Common myeloid progenitor, CD34-positive (primary cell): ENCODE measurements at regions of chr18 and their contacts with region 1.

Region 1: GRCh38 chr18:76633588-76634269 is 138.7 kb upstream of the ZNF516 start:
- DNase-seq: peak in 2 of 3 donors; percentile 53 to 60
- H3K4me3 ChIP-seq: no peak overlapping the region
- H3K27ac ChIP-seq: no peak overlapping the region
- H3K4me1 ChIP-seq: peaks cover 0 to 7% (median 3%) of the 10 kb centered on the region in 4 experiments
- H3K27me3 ChIP-seq: no peaks in the 10 kb centered on the region

Region 2: DNA sequence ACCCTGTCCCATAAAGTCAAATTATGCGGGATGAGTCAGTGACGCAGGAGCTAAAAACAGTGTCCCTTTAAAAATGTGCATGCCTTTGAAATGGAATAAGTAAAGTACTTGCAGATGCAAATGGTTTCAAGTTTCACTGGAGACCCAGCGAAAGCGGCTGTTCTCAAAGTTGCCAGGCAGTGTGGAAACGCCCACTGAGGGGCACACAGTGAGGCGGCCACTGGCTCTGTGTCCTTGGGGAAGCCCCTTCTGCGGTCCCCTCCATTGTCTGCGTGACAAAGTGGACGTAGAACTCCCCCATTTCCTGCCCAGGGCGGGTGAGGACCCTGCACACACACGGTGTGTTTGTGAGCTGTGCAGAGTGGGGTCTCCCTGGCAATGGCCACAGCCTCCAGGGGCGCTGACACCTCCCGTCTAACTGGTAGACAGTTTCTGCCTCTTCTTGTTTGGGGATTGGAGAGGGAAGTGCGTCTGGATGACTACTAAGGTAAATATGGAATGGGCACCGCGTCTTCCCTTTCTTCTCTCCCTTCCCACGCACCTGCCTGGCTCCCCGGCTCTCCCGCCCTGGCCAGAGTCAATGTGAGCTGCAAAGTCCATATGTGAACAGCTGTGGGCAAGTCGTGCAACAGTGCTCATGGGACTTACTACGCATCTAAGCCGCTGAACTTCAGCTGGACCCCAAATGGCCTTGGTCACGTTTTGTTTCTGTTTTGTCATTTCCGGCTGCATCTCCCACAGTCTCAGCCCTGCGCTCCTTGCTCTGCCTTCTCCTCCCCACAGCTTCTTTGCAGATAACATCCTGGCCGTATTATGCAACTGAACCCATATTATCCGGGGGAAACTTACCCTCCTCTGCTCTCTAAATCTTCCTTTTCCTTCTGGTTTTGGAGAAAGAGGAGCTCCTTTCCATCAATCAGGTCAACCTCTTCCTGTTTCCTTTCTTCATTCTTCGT is 105.0 kb before region 1 on chr18:
- CTCF ChIA-PET with region 1: no interaction called
- POLR2A ChIA-PET with region 1: no interaction called
- DNase-seq: peak; percentile 28 to 78 (median 72)
- H3K4me3 ChIP-seq: peak overlapping the region in 5 of 7 experiments; percentile 39 to 71 (median 59)
- H3K27ac ChIP-seq: no peak overlapping the region
- H3K4me1 ChIP-seq: peaks cover 3 to 19% (median 15%) of the 10 kb centered on the region in 4 experiments
- H3K27me3 ChIP-seq: peaks cover 0 to 15% (median 2%) of the 10 kb centered on the region in 5 experiments

Region 3: DNA sequence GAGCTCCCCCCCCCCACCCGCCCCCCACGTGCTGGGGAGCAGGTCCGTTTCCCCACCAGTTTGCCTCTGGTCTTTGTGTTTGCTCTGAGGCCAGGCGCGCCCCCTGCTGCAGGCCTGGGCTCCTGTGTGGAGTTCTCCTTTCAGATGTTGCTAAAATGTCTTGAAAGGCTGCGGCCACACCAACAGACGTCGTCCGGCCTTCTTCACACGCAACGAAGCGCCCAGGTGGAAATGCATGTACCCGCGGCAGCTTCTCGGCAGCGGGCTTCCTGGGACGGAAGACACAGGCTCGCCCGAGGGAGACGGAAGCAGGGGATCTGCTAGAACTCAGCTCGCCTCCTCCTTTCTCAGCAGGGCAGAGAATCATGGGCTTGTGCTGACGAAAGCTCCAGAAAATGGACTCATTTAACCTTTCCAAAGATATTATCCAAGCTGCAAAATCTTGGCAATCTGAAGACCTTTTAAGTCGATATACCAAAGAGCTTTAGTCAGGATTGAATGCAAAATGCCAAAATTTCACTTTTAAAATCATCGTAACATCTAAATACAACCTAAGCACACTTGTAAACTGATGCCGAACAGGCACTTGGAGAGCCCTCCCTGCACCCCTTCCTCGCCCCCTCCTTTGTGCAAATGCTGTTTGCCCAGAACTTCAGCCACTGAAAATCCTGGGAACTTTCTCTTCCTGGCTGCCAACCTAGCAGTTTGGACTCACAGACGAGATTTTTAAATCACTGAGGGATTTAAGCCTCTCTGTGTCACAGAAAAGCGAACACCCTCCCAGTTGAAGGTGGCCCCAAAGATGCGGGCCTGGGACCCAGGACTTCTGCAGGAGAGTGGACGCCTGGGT is 13.2 kb before region 1 on chr18:
- CTCF ChIA-PET with region 1: interaction called, 11 read pairs
- POLR2A ChIA-PET with region 1: no interaction called
- DNase-seq: peak; percentile 68 to 83 (median 81)
- H3K4me3 ChIP-seq: peak overlapping the region in 5 of 7 experiments; percentile 29 to 72 (median 54)
- H3K27ac ChIP-seq: no peak overlapping the region
- H3K4me1 ChIP-seq: peaks cover 0 to 35% (median 20%) of the 10 kb centered on the region in 4 experiments
- H3K27me3 ChIP-seq: no peaks in the 10 kb centered on the region

Region 4: GRCh38 chr18:76736309-76736708 is 102.6 kb after region 1 on chr18:
- CTCF ChIA-PET with region 1: no interaction called
- POLR2A ChIA-PET with region 1: no interaction called
- DNase-seq: no peak
- H3K4me3 ChIP-seq: no peak overlapping the region
- H3K27ac ChIP-seq: no peak overlapping the region
- H3K4me1 ChIP-seq: peaks cover 0 to 12% (median 7%) of the 10 kb centered on the region in 4 experiments
- H3K27me3 ChIP-seq: peaks cover 0 to 3% (median 0%) of the 10 kb centered on the region in 5 experiments